HepG2 (cell line): ENCODE measurements at regions of chr13 and their contacts with region 1.

Region 1: GRCh38 chr13:31742097-31742734 is 2.9 kb downstream of the RXFP2 start:
- DNase-seq: peak; percentile 28
- ATAC-seq: peak; percentile 77
- H3K4me3 ChIP-seq: no peak overlapping the region
- H3K27ac ChIP-seq: no peak overlapping the region
- H3K4me1 ChIP-seq: no peaks in the 10 kb centered on the region
- H3K27me3 ChIP-seq: peaks cover 0 to 13% of the 10 kb centered on the region in 2 experiments; a peak in 3 of 5 replicates
- CTCF ChIP-seq: peak; percentile 84
- EP300 ChIP-seq: no peak
- POLR2A ChIP-seq: no peak
- RAD21 ChIP-seq: peak; percentile 40

Region 2: GRCh38 chr13:31236211-31236786 is 505.9 kb before region 1 on chr13:
- CTCF ChIA-PET with region 1: no interaction called
- POLR2A ChIA-PET with region 1: no interaction called
- in situ Hi-C with region 1: loop called (anchors 25 kb)
- intact Hi-C with region 1: loop called (anchors 10 kb)
- DNase-seq: peak; percentile 31
- ATAC-seq: peak; percentile 63
- H3K4me3 ChIP-seq: no peak overlapping the region
- H3K27ac ChIP-seq: no peak overlapping the region
- H3K4me1 ChIP-seq: no peaks in the 10 kb centered on the region
- H3K27me3 ChIP-seq: no peaks in the 10 kb centered on the region
- CTCF ChIP-seq: peak; percentile 62
- EP300 ChIP-seq: no peak
- POLR2A ChIP-seq: no peak
- RAD21 ChIP-seq: 0 out of 2 replicates have a peak, but pooled peaks have one; percentile 23

Region 3: GRCh38 chr13:31431722-31432137 is 310.5 kb before region 1 on chr13:
- CTCF ChIA-PET with region 1: interaction called, 31 read pairs
- POLR2A ChIA-PET with region 1: no interaction called
- in situ Hi-C with region 1: loop called (anchors 5 kb)
- intact Hi-C with region 1: loop called (anchors 1 kb)
- DNase-seq: peak; percentile 10
- ATAC-seq: peak; percentile 72
- H3K4me3 ChIP-seq: no peak overlapping the region
- H3K27ac ChIP-seq: no peak overlapping the region
- H3K4me1 ChIP-seq: no peaks in the 10 kb centered on the region
- H3K27me3 ChIP-seq: peaks cover 0 to 10% of the 10 kb centered on the region in 2 experiments; a peak in 1 of 5 replicates
- CTCF ChIP-seq: peak; percentile 65
- EP300 ChIP-seq: no peak
- POLR2A ChIP-seq: no peak
- RAD21 ChIP-seq: no peak

Region 4: GRCh38 chr13:31538067-31539042 is 203.9 kb before region 1 on chr13:
- CTCF ChIA-PET with region 1: interaction called, 9 read pairs
- POLR2A ChIA-PET with region 1: no interaction called
- in situ Hi-C with region 1: loop called (anchors 5 kb)
- intact Hi-C with region 1: loop called (anchors 1 kb)
- DNase-seq: peak; percentile 16
- ATAC-seq: peak; percentile 79
- H3K4me3 ChIP-seq: no peak overlapping the region
- H3K27ac ChIP-seq: no peak overlapping the region
- H3K4me1 ChIP-seq: no peaks in the 10 kb centered on the region
- H3K27me3 ChIP-seq: no peaks in the 10 kb centered on the region
- CTCF ChIP-seq: peak; percentile 37; the same call in 1 of the 2 replicates
- EP300 ChIP-seq: no peak
- POLR2A ChIP-seq: no peak
- RAD21 ChIP-seq: no peak

Region 5: GRCh38 chr13:31663880-31664585 is 78.2 kb before region 1 on chr13:
- CTCF ChIA-PET with region 1: no interaction called
- POLR2A ChIA-PET with region 1: no interaction called
- in situ Hi-C with region 1: no loop called
- intact Hi-C with region 1: loop called (anchors 5 kb)
- DNase-seq: no peak
- ATAC-seq: no peak
- H3K4me3 ChIP-seq: no peak overlapping the region
- H3K27ac ChIP-seq: no peak overlapping the region
- H3K4me1 ChIP-seq: no peaks in the 10 kb centered on the region
- H3K27me3 ChIP-seq: no peaks in the 10 kb centered on the region; a peak in 1 of 5 replicates
- CTCF ChIP-seq: no peak
- EP300 ChIP-seq: no peak
- POLR2A ChIP-seq: no peak
- RAD21 ChIP-seq: no peak

Region 6: DNA sequence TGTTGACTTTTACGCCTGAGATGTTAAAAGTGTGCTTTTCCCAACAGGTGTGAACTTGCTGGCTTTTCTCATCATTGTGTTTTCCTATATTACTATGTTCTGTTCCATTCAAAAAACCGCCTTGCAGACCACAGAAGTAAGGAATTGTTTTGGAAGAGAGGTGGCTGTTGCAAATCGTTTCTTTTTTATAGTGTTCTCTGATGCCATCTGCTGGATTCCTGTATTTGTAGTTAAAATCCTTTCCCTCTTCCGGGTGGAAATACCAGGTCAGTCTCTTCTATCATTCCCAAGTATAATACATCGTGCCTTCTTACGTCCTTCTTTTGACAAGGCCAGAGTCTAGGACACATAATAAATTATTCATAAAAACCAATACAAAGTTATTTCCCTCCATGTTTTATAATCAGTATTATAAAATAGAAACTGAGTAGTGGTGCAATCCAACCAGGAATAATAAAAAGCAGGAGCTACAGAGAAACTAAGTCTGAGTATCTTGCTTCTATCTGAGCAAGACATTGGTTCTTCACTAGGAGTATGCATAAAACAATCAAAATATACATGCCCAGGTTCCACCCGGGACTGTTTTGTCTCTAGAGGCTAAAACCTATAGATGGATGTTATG is 55.0 kb after region 1 on chr13:
- CTCF ChIA-PET with region 1: no interaction called
- POLR2A ChIA-PET with region 1: no interaction called
- in situ Hi-C with region 1: no loop called
- intact Hi-C with region 1: no loop called
- DNase-seq: peak; percentile 3
- ATAC-seq: peak; percentile 43; the same call in 2 of the 3 replicates
- H3K4me3 ChIP-seq: no peak overlapping the region
- H3K27ac ChIP-seq: no peak overlapping the region
- H3K4me1 ChIP-seq: no peaks in the 10 kb centered on the region
- H3K27me3 ChIP-seq: peaks cover 0 to 2% of the 10 kb centered on the region in 2 experiments; a peak in 1 of 5 replicates
- CTCF ChIP-seq: peak; percentile 40
- EP300 ChIP-seq: no peak
- POLR2A ChIP-seq: no peak
- RAD21 ChIP-seq: no peak